H1 (cell line): ENCODE measurements at regions of chr10 and their contacts with region 1.

Region 1: GRCh38 chr10:74081192-74081803 is 69.3 kb downstream of the AP3M1 start:
- DNase-seq: no peak
- H3K4me3 ChIP-seq: no peak overlapping the region
- H3K27ac ChIP-seq: no peak overlapping the region
- H3K4me1 ChIP-seq: peaks cover 0 to 15% (median 2%) of the 10 kb centered on the region in 4 experiments; a peak in 3 of 7 replicates
- H3K27me3 ChIP-seq: no peaks in the 10 kb centered on the region
- CTCF ChIP-seq: peak; percentile 32 to 78 (median 77)
- EP300 ChIP-seq: no peak
- POLR2A ChIP-seq: no peak
- RAD21 ChIP-seq: peak; percentile 60 to 77

Region 2: GRCh38 chr10:73956476-73957359 is 124.6 kb before region 1 on chr10:
- CTCF ChIA-PET with region 1: interaction called, 10 read pairs
- POLR2A ChIA-PET with region 1: no interaction called
- DNase-seq: no peak
- H3K4me3 ChIP-seq: no peak overlapping the region
- H3K27ac ChIP-seq: no peak overlapping the region
- H3K4me1 ChIP-seq: peaks cover 2 to 5% (median 5%) of the 10 kb centered on the region in 4 experiments
- H3K27me3 ChIP-seq: no peaks in the 10 kb centered on the region
- CTCF ChIP-seq: no peak
- EP300 ChIP-seq: no peak
- POLR2A ChIP-seq: no peak
- RAD21 ChIP-seq: no peak

Region 3: DNA sequence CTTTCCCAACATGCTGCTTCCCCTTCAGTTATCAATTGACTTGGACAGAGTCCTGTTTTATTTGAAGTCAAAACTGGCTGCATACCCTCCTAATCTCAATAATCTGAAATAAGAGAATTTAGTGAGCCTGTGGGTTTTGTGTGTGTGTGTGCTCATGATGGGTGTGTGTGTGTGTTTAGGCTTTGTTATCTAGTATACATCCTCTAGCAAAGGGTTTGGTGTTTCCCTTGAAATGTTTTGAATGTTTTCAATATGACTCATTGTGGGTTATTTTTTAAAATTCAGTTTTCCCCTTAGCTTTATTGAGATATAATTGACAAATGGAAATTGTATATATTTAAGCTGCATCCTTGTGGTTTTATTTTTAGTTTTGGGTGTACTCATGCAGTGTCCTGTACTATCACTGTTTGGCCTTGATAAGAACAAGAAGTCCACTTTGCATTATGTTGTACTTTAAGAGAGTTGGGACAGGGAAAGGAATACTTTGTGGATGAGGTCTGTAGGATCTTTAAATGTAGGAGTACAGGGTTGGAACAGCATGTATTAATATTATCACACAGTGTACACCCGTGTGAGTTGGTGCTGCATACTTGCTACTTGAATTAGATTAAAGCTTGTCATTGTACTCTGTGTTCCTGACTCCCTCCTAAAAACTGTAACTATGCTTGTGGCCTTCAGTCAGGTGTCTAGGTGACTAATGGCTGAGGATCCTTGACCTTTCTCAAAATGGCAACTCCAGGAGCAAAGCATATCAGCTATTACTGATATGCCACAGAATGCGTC is 25.1 kb before region 1 on chr10:
- CTCF ChIA-PET with region 1: interaction called, 10 read pairs
- POLR2A ChIA-PET with region 1: interaction called, 4 read pairs
- DNase-seq: no peak
- H3K4me3 ChIP-seq: no peak overlapping the region
- H3K27ac ChIP-seq: no peak overlapping the region
- H3K4me1 ChIP-seq: peaks cover 0 to 4% (median 2%) of the 10 kb centered on the region in 4 experiments; a peak in 3 of 7 replicates
- H3K27me3 ChIP-seq: no peaks in the 10 kb centered on the region
- CTCF ChIP-seq: no peak
- EP300 ChIP-seq: no peak
- POLR2A ChIP-seq: no peak
- RAD21 ChIP-seq: no peak

Region 4: DNA sequence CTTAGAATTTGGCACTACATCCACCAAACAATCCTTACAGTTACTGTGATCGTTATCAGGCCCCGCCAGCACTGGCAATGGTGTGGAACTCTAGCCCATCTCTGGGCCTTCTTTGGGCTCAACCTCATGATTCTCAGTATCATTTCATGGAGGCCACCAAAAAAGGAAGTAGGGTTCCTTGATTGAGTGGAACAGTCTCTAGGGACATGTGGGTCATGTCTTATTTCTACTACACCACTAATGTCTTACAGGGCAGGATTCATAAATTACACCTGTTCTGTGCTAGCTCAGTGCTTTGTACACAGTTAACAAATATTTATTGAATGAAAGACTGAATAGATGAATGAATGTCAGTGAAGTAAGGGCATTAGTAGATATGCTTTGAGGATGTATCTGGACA is 15.5 kb after region 1 on chr10:
- CTCF ChIA-PET with region 1: interaction called, 10 read pairs
- POLR2A ChIA-PET with region 1: interaction called, 5 read pairs
- DNase-seq: no peak
- H3K4me3 ChIP-seq: no peak overlapping the region
- H3K27ac ChIP-seq: no peak overlapping the region
- H3K4me1 ChIP-seq: no peaks in the 10 kb centered on the region
- H3K27me3 ChIP-seq: no peaks in the 10 kb centered on the region
- CTCF ChIP-seq: no peak
- EP300 ChIP-seq: no peak
- POLR2A ChIP-seq: no peak
- RAD21 ChIP-seq: no peak

Region 5: GRCh38 chr10:74194545-74194944 is 113.2 kb after region 1 on chr10:
- CTCF ChIA-PET with region 1: no interaction called
- POLR2A ChIA-PET with region 1: no interaction called
- DNase-seq: no peak
- H3K4me3 ChIP-seq: no peak overlapping the region
- H3K27ac ChIP-seq: no peak overlapping the region
- H3K4me1 ChIP-seq: peaks cover 0 to 3% (median 1%) of the 10 kb centered on the region in 4 experiments; a peak in 2 of 7 replicates
- H3K27me3 ChIP-seq: no peaks in the 10 kb centered on the region
- CTCF ChIP-seq: no peak
- EP300 ChIP-seq: no peak
- POLR2A ChIP-seq: no peak
- RAD21 ChIP-seq: no peak